OCI-LY7 (cell line): ENCODE measurements at regions of chr10 and their contacts with region 1.

Region 1: DNA sequence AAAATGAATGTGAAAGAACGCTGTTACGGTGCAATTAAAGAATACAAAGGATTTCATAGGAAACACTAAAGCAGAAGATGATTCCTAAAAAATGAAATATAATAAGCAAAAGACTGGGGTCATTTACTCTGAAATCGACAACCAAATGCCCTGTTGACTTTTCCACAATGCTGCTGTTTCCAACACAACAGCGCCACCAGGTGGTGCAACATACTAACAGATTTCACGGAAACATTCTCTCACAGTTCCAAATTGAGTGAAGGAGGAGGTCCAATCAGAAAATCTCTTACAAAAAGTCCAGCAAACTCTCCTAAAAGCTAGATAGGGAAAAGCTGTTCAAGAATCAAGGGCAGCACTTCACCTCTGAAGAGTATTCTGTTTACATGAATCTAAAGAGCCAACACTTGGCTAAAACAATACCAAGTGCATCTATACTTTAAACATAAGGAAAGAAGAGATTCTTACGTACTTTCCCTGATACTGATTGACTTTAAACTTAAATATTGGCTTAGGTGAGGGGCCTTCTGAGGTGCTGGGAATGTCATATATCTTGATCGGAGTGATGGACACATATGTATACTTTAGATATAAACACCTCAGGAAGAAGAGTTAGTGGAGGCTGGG is 55.9 kb downstream of the UPF2 start:
- DNase-seq: peak; percentile 82
- H3K4me3 ChIP-seq: no peak overlapping the region
- H3K27ac ChIP-seq: peak overlapping the region; percentile 13
- H3K4me1 ChIP-seq: peaks cover 42% of the 10 kb centered on the region
- CTCF ChIP-seq: peak; percentile 100

Region 2: DNA sequence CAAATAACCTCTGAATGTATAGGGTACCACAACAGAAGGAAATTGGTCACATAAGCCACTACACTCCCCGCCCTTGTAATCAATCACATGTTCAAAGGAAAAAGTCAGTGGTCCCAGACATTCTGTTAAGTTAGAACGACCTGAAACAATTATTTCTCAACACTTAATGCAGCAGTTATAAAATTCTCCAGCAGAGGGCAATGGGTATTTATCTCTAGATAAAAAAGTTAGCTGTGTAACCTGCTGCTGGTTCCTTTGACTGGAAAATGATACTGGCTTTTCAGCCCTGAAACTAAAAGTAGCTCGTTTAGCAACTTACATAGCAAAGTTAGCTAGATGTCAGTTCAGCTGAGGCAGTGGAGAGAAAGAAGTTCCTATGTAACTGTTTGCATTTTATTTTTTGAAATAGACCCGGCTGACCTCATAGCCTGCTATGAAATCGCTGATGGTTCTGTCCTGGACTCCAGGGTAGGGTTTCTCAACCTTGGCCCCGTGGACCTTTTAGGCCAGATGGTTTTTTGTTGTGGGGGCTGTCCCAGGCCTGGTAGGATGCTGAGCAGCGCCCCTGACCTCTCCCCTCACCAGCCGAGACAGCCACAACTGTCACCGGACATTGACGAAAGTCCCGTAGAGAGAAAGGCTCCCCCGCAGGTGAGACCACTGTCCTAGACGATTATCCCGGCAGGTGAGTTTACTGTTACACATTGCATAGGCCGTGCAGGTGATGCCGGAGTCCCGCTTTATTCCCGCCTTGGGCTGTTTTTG is 203.7 kb before region 1 on chr10:
- CTCF ChIA-PET with region 1: no interaction called
- POLR2A ChIA-PET with region 1: interaction called, 3 read pairs
- intact Hi-C with region 1: loop called (anchors 2 kb)
- DNase-seq: peak; percentile 75
- H3K4me3 ChIP-seq: no peak overlapping the region
- H3K27ac ChIP-seq: no peak overlapping the region
- H3K4me1 ChIP-seq: no peaks in the 10 kb centered on the region
- CTCF ChIP-seq: peak; percentile 91

Region 3: GRCh38 chr10:11819030-11819429 is 167.7 kb before region 1 on chr10:
- CTCF ChIA-PET with region 1: no interaction called
- POLR2A ChIA-PET with region 1: no interaction called
- intact Hi-C with region 1: loop called (anchors 1 kb)
- DNase-seq: no peak
- H3K4me3 ChIP-seq: no peak overlapping the region
- H3K27ac ChIP-seq: no peak overlapping the region
- H3K4me1 ChIP-seq: no peaks in the 10 kb centered on the region
- CTCF ChIP-seq: no peak

Region 4: DNA sequence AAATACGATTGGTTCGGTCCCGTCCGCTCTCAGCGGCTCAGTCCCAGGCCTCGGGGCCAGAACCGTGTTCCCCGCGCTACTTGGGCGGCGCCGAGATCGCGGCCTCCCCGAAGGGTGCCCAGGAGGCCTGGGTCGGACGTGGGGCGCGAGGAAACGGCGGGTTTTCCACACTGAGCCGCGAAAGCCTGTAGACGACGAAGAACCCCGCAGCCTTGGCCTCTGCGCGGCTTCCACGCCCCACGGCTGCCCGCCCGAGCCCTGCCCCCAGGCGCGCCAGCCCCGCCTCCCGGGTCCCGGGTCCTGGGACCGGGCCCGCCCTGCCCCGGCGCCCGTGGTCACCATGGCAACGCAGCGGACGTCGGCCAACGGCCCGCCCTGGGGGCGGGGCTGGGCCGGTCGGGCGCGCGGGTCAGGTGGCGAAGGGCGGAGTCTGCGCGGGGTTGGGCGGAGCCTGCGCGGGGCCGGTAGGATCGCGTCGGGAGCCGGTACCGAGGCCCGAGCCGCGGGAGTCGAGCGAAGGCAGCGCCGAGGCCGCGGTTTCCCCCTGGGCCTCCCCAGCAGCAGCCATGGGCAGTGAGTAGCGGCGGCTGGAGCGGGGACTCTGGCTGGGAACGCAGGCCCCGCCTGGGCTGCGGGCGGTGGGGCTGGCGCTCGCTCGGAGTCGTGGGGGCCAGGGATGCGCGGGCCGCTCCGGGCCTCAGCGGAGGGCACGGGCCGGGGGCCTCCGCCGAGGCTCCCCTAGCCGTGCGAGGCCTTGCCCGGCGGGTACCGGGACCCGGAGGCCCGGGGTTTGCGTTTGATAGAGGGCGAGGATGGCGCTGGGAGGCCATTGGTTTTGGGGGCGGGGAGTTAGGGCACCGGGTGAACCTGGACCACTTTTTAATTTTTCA is 142.8 kb after region 1 on chr10 and contains the start of gene SEC61A2:
- CTCF ChIA-PET with region 1: no interaction called
- POLR2A ChIA-PET with region 1: no interaction called
- intact Hi-C with region 1: loop called (anchors 2 kb)
- DNase-seq: peak; percentile 96
- H3K4me3 ChIP-seq: peak within 1 kb of the TSS; percentile 91
- H3K27ac ChIP-seq: peak within 1 kb of the TSS; percentile 36
- H3K4me1 ChIP-seq: peaks cover 6% of the 10 kb centered on the region
- CTCF ChIP-seq: no peak
- total RNA-seq, gene SEC61A2: 4.8 and 5.5 TPM in 2 replicates